CD4-positive, alpha-beta memory T cell (primary cell): ENCODE measurements at regions of chr7 and their contacts with region 1.

Region 1: DNA sequence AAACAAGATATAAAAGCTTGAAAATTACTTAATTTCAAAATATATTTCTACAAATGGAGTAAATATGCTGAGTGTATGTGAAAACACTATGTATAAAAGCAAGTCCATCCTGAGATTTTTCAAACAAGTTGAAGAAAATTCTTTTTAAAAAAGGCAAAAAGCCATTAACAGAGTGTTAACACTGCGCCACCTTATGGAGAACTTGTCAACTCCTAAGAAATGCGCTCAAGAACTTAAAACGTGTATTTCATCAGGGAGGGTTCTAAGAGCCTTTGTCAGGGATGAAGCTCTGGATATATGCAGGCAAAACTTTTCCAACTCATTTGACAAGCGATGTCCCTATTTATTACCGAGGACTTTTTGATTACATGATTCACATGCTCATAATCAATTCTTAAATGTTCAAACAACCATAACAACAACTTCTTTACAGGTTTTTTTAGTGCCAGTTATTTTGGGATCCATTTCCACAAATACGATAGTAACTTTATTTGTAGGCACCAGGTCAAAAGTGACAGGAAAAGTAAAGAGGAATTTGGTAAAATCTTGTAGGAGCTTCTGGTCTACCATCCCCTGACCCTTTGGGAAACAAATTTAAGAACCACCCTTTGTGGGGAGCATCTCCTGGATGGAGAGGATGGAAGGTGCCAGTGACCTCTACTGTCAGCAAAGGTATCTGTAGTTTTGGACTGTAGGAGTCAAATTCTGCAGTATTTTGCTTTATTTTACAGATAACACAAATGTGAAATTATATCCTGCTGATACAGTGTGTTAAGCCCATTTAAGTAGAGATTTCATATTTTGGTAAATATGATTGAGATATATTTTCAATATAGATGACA is 23.2 kb downstream of the CALCR start:
- DNase-seq: no peak
- H3K4me3 ChIP-seq: no peak overlapping the region
- H3K4me3 Mint-ChIP-seq: no peak overlapping the region
- H3K27ac ChIP-seq: no peak overlapping the region
- H3K27ac Mint-ChIP-seq: no peak overlapping the region
- H3K4me1 ChIP-seq: no peaks in the 10 kb centered on the region
- H3K4me1 Mint-ChIP-seq: no peaks in the 10 kb centered on the region
- H3K27me3 ChIP-seq: no peaks in the 10 kb centered on the region
- H3K27me3 Mint-ChIP-seq: no peaks in the 10 kb centered on the region

Region 2: GRCh38 chr7:93245525-93246432 is 305.5 kb before region 1 on chr7:
- CTCF ChIA-PET with region 1: interaction called, 5 read pairs
- POLR2A ChIA-PET with region 1: no interaction called
- intact Hi-C with region 1: loop called (anchors 5 kb)
- DNase-seq: peak; percentile 35 to 52 (median 46)
- H3K4me3 ChIP-seq: peak overlapping the region in 1 of 2 donors; percentile 9
- H3K4me3 Mint-ChIP-seq: peak overlapping the region; percentile 56 to 79 (median 74)
- H3K27ac ChIP-seq: no peak overlapping the region
- H3K27ac Mint-ChIP-seq: peak overlapping the region in 6 of 7 donors; percentile 37 to 88 (median 68)
- H3K4me1 ChIP-seq: no peaks in the 10 kb centered on the region
- H3K4me1 Mint-ChIP-seq: peaks cover 12 to 15% (median 14%) of the 10 kb centered on the region in 4 donors
- H3K27me3 ChIP-seq: no peaks in the 10 kb centered on the region
- H3K27me3 Mint-ChIP-seq: no peaks in the 10 kb centered on the region

Region 3: GRCh38 chr7:93476491-93477344 is 74.6 kb before region 1 on chr7:
- CTCF ChIA-PET with region 1: no interaction called
- POLR2A ChIA-PET with region 1: no interaction called
- intact Hi-C with region 1: no loop called
- DNase-seq: no peak
- H3K4me3 ChIP-seq: no peak overlapping the region
- H3K4me3 Mint-ChIP-seq: no peak overlapping the region
- H3K27ac ChIP-seq: no peak overlapping the region
- H3K27ac Mint-ChIP-seq: no peak overlapping the region
- H3K4me1 ChIP-seq: no peaks in the 10 kb centered on the region
- H3K4me1 Mint-ChIP-seq: no peaks in the 10 kb centered on the region
- H3K27me3 ChIP-seq: no peaks in the 10 kb centered on the region
- H3K27me3 Mint-ChIP-seq: no peaks in the 10 kb centered on the region

Region 4: GRCh38 chr7:93636276-93636675 is 85.0 kb after region 1 on chr7:
- CTCF ChIA-PET with region 1: no interaction called
- POLR2A ChIA-PET with region 1: no interaction called
- intact Hi-C with region 1: no loop called
- DNase-seq: no peak
- H3K4me3 ChIP-seq: no peak overlapping the region
- H3K4me3 Mint-ChIP-seq: no peak overlapping the region
- H3K27ac ChIP-seq: no peak overlapping the region
- H3K27ac Mint-ChIP-seq: no peak overlapping the region
- H3K4me1 ChIP-seq: no peaks in the 10 kb centered on the region
- H3K4me1 Mint-ChIP-seq: no peaks in the 10 kb centered on the region
- H3K27me3 ChIP-seq: no peaks in the 10 kb centered on the region
- H3K27me3 Mint-ChIP-seq: no peaks in the 10 kb centered on the region